Activated T-helper 1 cell treated with anti-CD3 and anti-CD28 coated beads, Interleukin-12 subunit alpha, Interleukin-12 subunit beta, Interleukin-2, Interleukin-4 antibody, amounts not matched to agents 30 ng/mL and 10 ng/mL and 1 ng/mL, durations not matched to agents 14 hours and 24 hours and 36 hours (primary cell): ENCODE measurements at regions of chr10 and their contacts with region 1.

Region 1: DNA sequence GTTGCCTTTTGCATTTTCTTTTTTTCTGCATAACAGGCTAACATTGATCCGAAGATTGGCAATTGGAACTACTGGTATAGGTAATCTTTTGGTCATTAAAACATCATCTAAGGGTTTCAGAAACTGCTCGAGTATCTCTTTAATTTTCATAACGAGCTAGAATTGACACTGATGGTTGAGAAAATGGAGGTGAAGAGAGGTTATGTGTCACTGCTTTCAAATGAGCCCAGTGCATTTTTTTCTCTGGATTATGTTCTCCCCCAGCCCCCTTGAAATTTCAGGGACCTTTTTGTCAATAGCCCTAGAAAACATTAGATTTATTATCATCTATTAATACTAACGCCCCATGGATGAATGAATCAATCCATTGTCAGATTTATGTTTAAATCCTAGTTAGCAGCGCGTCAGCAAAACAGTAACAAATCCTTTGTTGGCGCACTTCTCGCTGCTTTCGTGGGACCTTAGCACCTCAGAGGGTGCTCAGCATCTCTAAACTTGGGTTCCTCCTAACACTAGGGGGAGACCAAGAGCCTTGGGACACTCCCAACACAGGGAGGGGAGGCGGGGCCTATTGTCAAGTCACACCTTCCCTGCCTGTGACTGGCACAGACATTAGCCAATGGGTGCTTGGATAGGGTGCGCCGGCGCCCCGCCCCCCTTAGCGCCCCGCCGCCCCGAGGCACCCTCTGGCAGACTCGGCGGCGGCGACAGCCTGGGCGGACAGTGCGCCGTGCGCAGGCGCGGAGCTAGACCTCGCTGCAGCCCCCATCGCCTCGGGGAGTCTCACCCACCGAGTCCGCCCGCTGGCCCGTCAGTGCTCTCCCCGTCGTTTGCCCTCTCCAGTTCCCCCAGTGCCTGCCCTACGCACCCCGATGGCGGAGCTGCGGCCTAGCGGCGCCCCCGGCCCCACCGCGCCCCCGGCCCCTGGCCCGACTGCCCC is at the start of gene SUFU:
- DNase-seq: peak; percentile 97
- H3K4me3 Mint-ChIP-seq: no peak within 1 kb of the TSS
- H3K27ac Mint-ChIP-seq: peak within 1 kb of the TSS; percentile 84
- H3K4me1 Mint-ChIP-seq: peaks cover 25% of the 10 kb centered on the region
- H3K27me3 Mint-ChIP-seq: no peaks in the 10 kb centered on the region
- total RNA-seq, gene SUFU: 9.3 and 11.6 TPM in 2 replicates

Region 2: GRCh38 chr10:102055647-102056419 is 447.7 kb before region 1 on chr10 and contains the start of gene ARMH3:
- intact Hi-C with region 1: loop called (anchors 1 kb)
- DNase-seq: peak; percentile 90
- H3K4me3 Mint-ChIP-seq: peak within 1 kb of the TSS; percentile 89
- H3K27ac Mint-ChIP-seq: peak within 1 kb of the TSS; percentile 94
- H3K4me1 Mint-ChIP-seq: peaks cover 31% of the 10 kb centered on the region
- H3K27me3 Mint-ChIP-seq: no peaks in the 10 kb centered on the region
- total RNA-seq, gene ARMH3: 21.5 and 24.8 TPM in 2 replicates

Region 3: DNA sequence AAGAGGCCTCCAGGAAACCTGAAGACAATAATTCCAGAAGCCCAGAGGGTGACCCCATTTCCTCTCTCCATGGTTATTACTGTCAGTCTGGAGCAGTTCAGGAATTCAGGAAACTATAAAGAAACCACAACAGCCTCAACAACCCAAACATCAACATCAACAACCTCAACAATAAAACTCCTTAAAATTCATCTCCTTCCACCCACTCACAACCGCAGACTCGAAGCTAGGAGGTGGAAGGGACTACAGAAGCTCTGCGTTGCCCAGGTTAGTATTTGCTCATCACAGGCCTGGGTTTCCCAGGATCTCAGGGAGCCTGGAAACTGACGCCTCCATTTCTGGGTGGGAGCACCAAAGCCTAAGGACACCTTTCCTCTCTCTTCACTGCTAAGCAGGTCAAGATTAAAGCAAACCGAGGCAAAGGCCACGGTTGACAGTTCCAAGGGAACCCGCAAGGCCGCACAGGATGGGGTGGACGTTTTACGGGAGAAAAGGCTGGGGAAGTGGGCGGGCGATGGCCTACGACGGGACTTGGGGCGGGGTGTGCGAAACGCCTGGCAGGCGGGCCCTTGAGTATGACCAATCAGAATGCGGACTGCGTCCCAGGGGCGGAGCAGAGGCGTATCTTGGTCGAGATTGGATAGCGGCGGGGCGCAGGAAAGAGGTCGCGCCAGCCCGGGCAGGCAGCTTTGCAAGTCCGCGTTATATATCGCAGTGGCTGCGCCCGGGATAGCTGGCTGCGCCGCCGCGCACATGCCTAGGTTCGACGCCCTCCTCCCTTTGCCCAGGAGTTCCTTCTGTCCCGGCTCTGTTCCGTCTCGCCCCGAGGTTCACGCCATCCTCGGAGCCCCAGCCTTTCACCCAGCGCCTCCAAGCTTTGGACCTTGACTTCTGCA is 277.7 kb before region 1 on chr10 and contains the start of gene ELOVL3:
- intact Hi-C with region 1: loop called (anchors 1 kb)
- DNase-seq: peak; percentile 87
- H3K4me3 Mint-ChIP-seq: peak within 1 kb of the TSS; percentile 63
- H3K27ac Mint-ChIP-seq: no peak within 1 kb of the TSS
- H3K4me1 Mint-ChIP-seq: peaks cover 21% of the 10 kb centered on the region
- H3K27me3 Mint-ChIP-seq: peaks cover 57% of the 10 kb centered on the region
- total RNA-seq, gene ELOVL3: 0.18 TPM in 1 of 2 replicates, not detected in the other

Region 4: DNA sequence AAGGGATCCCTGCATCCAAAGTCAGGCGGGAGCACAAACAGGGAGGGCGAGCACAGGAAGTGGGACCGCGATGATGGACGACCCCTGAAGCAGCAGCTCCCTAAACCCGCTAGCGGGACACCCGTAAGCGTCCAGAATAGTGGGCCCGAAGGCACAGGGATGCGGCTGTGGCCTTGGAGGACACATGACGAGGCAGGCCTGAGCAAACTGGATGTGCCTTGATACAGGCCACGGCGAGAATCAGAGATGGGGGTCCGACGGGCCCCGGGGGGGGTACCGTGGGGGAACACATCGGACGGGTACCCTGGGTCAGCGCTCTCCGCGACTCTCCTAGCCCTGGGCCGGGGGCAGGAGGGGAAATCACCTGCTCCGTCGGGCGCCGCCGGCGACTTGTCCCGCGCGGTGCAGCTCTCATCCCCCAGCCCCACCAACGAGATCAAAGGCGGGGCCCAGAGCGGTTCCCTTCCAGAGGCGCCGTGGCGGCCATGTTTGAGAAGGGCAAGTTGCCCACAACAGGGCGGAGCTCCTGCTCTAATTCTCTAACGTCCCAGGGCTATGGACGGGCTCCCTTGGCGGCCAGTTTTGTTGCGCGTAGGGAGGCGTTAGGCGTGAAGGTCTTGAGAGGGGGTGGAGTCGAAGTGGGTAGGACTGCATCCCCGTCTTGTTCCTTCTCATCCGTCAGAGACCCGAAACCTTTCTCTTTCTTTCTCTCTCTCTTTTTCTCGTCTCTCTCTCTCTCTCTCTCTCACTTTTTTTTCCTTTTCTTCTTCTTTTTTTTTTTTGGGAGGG is 71.2 kb before region 1 on chr10 and contains the start of gene CUEDC2:
- intact Hi-C with region 1: loop called (anchors 1 kb)
- DNase-seq: peak; percentile 95
- H3K4me3 Mint-ChIP-seq: peak within 1 kb of the TSS; percentile 95
- H3K27ac Mint-ChIP-seq: peak within 1 kb of the TSS; percentile 94
- H3K4me1 Mint-ChIP-seq: peaks cover 55% of the 10 kb centered on the region
- H3K27me3 Mint-ChIP-seq: no peaks in the 10 kb centered on the region
- total RNA-seq, gene CUEDC2: 59.0 and 59.4 TPM in 2 replicates

Region 5: GRCh38 chr10:102583435-102584417 is 80.2 kb after region 1 on chr10:
- intact Hi-C with region 1: loop called (anchors 1 kb)
- DNase-seq: peak; percentile 73
- H3K4me3 Mint-ChIP-seq: no peak overlapping the region
- H3K27ac Mint-ChIP-seq: no peak overlapping the region
- H3K4me1 Mint-ChIP-seq: peaks cover 16% of the 10 kb centered on the region
- H3K27me3 Mint-ChIP-seq: peaks cover 2% of the 10 kb centered on the region

Region 6: DNA sequence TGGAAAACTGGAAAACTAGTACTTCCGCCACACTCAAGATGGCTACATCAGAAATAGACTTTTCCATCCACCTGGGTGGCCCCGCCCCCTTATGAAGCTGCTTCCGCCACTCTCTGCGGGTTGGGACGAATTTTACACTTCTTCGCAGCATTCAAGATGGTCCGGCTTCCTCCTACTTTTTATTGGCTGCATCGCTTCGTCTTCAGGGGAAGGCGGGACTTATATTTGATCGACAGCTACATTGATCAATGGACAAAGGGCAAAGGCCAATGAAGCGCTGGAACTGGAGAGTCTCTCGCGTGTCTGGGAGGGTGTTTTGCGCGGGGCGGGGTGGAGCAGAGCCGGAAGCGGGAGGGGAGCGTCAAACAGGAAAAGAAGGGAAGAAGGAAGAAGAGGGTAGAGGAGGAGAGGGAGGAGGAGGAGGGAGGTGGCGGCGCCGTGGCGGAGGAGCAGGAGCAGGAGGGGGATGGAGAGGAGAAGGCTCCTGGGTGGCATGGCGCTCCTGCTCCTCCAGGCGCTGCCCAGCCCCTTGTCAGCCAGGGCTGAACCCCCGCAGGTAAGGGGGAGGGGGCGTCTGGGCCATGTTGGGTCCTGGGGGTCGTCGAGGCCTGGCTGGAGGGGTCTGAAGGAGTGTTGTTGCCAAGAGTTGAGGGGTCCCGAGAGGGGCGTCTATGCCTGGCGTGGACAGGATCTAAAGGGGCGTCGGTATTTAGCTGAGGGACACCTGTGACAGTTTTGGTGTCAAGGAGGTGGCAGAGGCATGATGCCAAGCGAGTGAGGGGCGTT is 240.2 kb after region 1 on chr10 and contains the start of gene WBP1L:
- intact Hi-C with region 1: loop called (anchors 1 kb)
- DNase-seq: peak; percentile 94
- H3K4me3 Mint-ChIP-seq: peak within 1 kb of the TSS; percentile 92
- H3K27ac Mint-ChIP-seq: peak within 1 kb of the TSS; percentile 93
- H3K4me1 Mint-ChIP-seq: peaks cover 46% of the 10 kb centered on the region
- H3K27me3 Mint-ChIP-seq: peaks cover 1% of the 10 kb centered on the region
- total RNA-seq, gene WBP1L: 19.4 and 20.0 TPM in 2 replicates

Region 7: GRCh38 chr10:103396064-103396788 is 892.7 kb after region 1 on chr10 and contains the starts of genes ATP5MK and PDCD11:
- intact Hi-C with region 1: loop called (anchors 1 kb)
- DNase-seq: peak; percentile 95
- H3K4me3 Mint-ChIP-seq: peak within 1 kb of the TSS; percentile 99
- H3K27ac Mint-ChIP-seq: peak within 1 kb of the TSS; percentile 96
- H3K4me1 Mint-ChIP-seq: peaks cover 58% of the 10 kb centered on the region
- H3K27me3 Mint-ChIP-seq: no peaks in the 10 kb centered on the region
- total RNA-seq, gene ATP5MK: 480 and 483 TPM in 2 replicates
- total RNA-seq, gene PDCD11: 98.4 and 99.0 TPM in 2 replicates